ENCODE measurements at regions of chr9 and their contacts with region 1.

Region 1: DNA sequence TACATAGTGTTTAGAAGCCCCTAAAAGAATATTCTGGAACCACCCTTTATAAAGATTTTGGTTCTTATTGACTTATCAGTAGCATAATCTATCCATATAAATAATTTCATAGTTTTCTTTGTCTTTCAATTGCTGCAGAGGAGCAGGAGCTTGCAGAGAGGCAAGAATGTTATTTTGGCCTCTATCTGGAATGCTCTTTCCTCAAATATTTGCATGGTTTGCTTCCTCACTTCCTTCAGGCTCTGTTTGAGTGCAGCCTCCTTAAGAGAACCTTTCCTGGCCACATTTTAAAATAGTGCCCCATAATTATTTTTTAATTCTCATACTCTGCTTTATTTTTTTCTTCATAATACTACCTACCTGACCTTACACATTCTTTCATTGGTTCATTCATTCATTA is 1.5 kb downstream of the C5 start:
- H3K4me3 Mint-ChIP-seq: no peak overlapping the region
- H3K27ac Mint-ChIP-seq: no peak overlapping the region
- H3K4me1 Mint-ChIP-seq: no peaks in the 10 kb centered on the region
- H3K27me3 Mint-ChIP-seq: no peaks in the 10 kb centered on the region

Region 2: GRCh38 chr9:121009650-121010049 is 39.0 kb before region 1 on chr9:
- intact Hi-C with region 1: loop called (anchors 5 kb)
- H3K4me3 Mint-ChIP-seq: no peak overlapping the region
- H3K27ac Mint-ChIP-seq: peak overlapping the region; percentile 5
- H3K4me1 Mint-ChIP-seq: peaks cover 10% of the 10 kb centered on the region
- H3K27me3 Mint-ChIP-seq: no peaks in the 10 kb centered on the region